G401 (cell line): ENCODE measurements at regions of chr3 and their contacts with region 1.

Region 1: DNA sequence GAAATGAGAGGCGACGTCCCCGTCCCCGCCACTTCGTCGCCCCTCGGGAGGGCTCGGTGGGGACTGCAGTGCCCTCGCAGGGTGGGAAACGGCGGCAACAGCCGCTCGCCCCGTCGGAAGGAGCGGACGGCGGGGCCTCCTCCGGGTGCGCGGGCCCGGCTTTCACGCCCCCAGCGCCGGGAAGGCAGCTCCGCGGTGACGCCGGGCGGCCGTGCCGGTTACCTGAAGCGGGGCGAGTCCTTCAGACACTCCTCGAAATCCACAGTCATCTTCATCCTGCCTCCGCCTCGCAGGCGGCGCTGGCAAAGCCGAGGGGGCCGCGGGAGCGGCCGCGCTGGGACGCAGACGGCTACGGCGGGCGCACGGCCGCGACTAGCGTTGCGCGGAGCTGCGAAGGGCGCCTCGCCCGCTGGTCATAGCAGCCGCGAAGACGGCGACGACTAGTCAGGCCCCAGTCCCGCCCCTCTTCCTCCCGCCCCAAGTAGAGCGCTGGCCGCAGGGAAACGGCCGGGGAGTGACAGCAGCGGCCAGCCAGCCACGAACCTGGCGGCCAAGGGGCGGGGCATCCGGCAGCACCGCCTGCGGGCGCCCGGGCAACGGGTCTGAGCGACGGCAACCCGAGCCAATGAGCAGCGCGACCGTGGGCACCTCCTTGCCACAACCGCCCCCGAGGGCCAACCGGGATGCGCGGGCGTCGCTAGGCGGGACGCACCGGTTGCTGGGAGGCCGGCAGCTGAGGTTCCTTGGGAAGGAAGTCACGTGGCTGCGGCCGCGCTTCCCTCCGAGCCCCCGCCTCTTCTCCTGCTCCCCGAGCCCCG is at the start of gene ACAP2:
- DNase-seq: peak; percentile 100
- total RNA-seq, gene ACAP2: 55.3 and 65.8 TPM in 2 replicates

Region 2: DNA sequence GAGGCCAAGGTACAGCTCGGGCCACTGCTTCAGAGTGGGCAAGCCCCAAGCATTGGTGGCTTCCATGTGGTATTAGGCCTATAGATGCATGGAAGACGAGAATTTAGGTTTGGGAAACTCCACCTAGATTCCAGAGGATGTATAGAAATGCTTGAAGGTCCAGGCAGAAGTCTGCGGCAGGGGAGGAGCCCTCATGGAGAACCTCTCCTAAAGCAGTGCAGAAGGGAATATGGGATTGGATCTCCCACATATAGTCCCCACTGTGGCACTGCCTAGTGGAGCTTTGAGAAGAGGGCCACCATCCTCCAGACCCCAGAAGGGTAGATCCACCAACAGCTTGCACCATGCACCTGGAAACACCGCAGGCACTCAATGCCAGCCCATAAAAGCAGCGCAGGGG is 123.7 kb before region 1 on chr3:
- in situ Hi-C with region 1: loop called (anchors 25 kb)
- DNase-seq: no peak